Common myeloid progenitor, CD34-positive (primary cell): ENCODE measurements at regions of chr17 and their contacts with region 1.

Region 1: GRCh38 chr17:60049936-60050335 is 28.8 kb downstream of the HEATR6 start:
- DNase-seq: no peak
- H3K4me3 ChIP-seq: no peak overlapping the region
- H3K27ac ChIP-seq: no peak overlapping the region
- H3K4me1 ChIP-seq: no peaks in the 10 kb centered on the region
- H3K27me3 ChIP-seq: no peaks in the 10 kb centered on the region

Region 2: DNA sequence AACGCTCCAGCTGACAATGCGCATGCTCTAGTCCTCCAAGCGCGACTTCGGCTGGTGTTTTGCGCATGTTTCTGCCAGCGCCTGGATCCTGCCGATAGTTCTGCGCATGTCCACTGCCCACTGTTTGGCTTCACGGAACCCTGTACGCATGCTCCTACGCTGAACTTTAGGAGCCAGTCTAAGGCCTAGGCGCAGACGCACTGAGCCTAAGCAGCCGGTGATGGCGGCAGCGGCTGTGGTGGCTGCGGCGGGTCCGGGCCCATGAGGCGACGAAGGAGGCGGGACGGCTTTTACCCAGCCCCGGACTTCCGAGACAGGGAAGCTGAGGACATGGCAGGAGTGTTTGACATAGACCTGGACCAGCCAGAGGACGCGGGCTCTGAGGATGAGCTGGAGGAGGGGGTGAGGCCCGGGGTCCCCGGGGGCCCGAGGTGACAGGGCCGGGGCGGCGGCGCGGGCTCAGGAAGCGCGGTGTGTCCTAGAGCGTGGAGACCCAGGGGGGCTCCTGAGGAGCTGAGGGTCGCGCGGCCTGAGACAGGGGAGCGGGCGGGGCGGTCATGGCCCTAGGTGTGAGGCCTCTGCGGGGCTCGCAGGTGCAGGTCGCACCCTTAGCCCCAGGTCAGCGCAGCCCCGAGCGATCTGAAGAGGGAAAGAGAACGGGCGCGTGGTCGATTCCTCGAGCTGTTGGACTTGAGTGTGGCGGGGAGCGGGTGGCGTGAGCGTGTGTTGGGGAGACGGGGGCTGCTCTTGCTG is 156.8 kb before region 1 on chr17 and contains the starts of genes RPS6KB1 and TUBD1:
- CTCF ChIA-PET with region 1: no interaction called
- POLR2A ChIA-PET with region 1: no interaction called
- DNase-seq: peak; percentile 99 to 100 (median 99)
- H3K4me3 ChIP-seq: peak within 1 kb of the TSS; percentile 77 to 98 (median 94)
- H3K27ac ChIP-seq: peak within 1 kb of the TSS; percentile 86 to 93
- H3K4me1 ChIP-seq: peaks cover 6 to 23% (median 18%) of the 10 kb centered on the region in 4 experiments
- H3K27me3 ChIP-seq: no peaks in the 10 kb centered on the region

Region 3: DNA sequence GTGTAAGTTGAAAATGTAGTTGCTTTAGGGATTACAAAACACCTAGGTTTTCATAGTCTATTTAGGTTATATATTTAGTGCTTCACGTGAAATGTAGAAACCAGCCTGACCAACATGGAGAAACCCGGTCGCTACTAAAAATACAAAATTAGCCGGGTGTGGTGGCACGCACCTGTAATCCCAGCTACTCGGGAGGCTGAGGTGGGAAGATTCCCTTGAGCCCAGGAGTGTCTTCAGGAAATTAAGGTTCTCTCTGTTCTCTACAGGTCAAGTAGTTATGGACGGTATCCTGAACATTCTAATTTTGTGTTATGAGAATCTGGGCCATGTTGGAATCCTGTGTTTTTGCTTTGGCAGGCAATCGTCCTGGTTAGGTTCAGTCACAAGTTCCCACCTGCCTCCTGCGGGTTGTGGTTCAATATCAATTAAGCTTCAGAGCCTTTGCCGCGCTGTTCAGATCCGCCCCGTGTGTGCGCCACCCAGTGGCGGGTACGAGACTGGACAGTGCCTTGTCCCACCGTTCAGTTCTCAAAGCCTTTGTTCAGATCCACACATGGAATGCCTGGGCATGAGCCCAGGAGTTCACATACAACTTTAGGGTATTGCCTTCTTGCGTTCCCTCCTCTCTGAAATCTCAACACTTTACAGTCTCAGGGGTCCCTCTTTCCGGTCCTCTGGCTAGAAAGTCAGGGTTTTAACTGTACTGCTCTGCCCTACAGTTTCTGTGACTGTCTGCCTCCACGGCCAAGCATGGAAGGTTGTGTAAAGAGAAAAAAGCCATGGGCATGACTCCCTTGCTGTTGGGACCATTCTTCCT is 12.9 kb before region 1 on chr17:
- CTCF ChIA-PET with region 1: interaction called, 13 read pairs
- POLR2A ChIA-PET with region 1: no interaction called
- DNase-seq: peak; percentile 78 to 85 (median 84)
- H3K4me3 ChIP-seq: peak overlapping the region in 2 of 7 experiments; percentile 4 to 12
- H3K27ac ChIP-seq: no peak overlapping the region
- H3K4me1 ChIP-seq: peaks cover 0 to 3% (median 1%) of the 10 kb centered on the region in 4 experiments
- H3K27me3 ChIP-seq: peaks cover 0 to 4% (median 0%) of the 10 kb centered on the region in 5 experiments